ENCODE measurements at regions of chr19 and their contacts with region 1.

Region 1: DNA sequence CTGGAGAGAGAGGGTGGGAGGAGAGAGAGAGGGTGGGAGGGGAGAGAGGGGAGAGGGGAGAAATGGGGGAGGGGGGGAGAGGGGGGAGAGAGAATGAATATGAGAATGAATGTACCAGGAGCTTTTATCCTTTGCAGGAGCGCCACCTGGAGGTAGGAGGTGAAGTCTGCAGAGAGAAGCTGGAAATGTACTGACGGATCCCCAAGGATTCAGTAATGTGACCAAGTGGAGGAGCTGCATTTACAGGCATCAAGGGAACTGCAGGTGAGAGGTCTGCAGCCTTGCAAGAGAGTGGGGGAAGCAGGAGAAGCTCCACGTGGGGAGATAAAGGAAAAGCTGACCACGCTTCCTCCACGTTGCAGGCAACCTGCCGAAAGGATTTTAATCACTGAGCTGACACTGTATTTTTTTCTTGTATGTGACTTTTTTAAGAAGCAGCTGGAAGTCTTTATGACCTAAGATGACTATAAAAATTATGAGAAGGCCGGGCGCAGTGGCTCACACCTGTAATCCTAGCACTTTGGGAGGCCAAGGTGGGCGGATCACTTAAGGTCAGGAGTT is 33.7 kb downstream of the VSTM1 start:
- DNase-seq: peak; percentile 75
- ATAC-seq: no peak
- H3K4me3 Mint-ChIP-seq: no peak overlapping the region
- H3K27ac Mint-ChIP-seq: no peak overlapping the region
- H3K4me1 Mint-ChIP-seq: no peaks in the 10 kb centered on the region
- H3K27me3 Mint-ChIP-seq: peaks cover 24% of the 10 kb centered on the region

Region 2: GRCh38 chr19:53844849-53845246 is 185.2 kb before region 1 on chr19:
- CTCF ChIA-PET with region 1: interaction called, 7 read pairs
- POLR2A ChIA-PET with region 1: no interaction called
- intact Hi-C with region 1: loop called in 1 of 2 experiments (anchors 1 kb)
- DNase-seq: no peak
- ATAC-seq: no peak
- H3K4me3 Mint-ChIP-seq: no peak overlapping the region
- H3K27ac Mint-ChIP-seq: no peak overlapping the region
- H3K4me1 Mint-ChIP-seq: peaks cover 5% of the 10 kb centered on the region
- H3K27me3 Mint-ChIP-seq: peaks cover 17% of the 10 kb centered on the region

Region 3: DNA sequence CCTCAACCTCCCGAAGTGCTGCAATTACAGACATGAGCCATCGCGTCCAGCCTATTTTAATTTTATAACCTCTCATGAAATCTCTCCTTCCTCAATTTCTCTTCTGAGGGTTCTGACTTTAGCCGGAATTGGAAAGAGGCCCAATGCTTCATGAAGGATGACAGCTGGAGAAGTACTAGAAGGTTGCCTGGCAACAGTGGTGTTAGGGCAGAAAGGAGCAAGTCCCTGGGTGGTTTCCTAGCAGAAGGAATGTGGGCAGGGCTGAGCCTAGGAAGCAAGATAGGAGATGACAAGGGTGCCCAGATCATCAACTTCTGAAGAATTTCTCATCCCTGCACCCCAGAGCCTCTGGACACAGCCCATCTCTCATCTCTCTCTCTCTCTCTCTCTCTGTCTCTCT is 12.7 kb before region 1 on chr19:
- CTCF ChIA-PET with region 1: interaction called, 14 read pairs
- POLR2A ChIA-PET with region 1: no interaction called
- intact Hi-C with region 1: no loop called
- DNase-seq: no peak
- ATAC-seq: no peak
- H3K4me3 Mint-ChIP-seq: no peak overlapping the region
- H3K27ac Mint-ChIP-seq: no peak overlapping the region
- H3K4me1 Mint-ChIP-seq: peaks cover 4% of the 10 kb centered on the region
- H3K27me3 Mint-ChIP-seq: peaks cover 28% of the 10 kb centered on the region

Measured in activated CD4-positive, alpha-beta T cell treated with anti-CD3 and anti-CD28 coated beads for 36 hours (primary cell).